H1 (cell line): ENCODE measurements at regions of chr4 and their contacts with region 1.

Region 1: GRCh38 chr4:96035727-96036126 is 195.8 kb downstream of the PDHA2 start:
- DNase-seq: no peak
- H3K4me3 ChIP-seq: no peak overlapping the region
- H3K27ac ChIP-seq: no peak overlapping the region
- H3K4me1 ChIP-seq: no peaks in the 10 kb centered on the region
- H3K27me3 ChIP-seq: no peaks in the 10 kb centered on the region
- CTCF ChIP-seq: peak in 1 of 3 experiments; percentile 57; a peak in 2 of 4 replicates
- EP300 ChIP-seq: no peak
- POLR2A ChIP-seq: no peak
- RAD21 ChIP-seq: peak; percentile 54 to 62

Region 2: DNA sequence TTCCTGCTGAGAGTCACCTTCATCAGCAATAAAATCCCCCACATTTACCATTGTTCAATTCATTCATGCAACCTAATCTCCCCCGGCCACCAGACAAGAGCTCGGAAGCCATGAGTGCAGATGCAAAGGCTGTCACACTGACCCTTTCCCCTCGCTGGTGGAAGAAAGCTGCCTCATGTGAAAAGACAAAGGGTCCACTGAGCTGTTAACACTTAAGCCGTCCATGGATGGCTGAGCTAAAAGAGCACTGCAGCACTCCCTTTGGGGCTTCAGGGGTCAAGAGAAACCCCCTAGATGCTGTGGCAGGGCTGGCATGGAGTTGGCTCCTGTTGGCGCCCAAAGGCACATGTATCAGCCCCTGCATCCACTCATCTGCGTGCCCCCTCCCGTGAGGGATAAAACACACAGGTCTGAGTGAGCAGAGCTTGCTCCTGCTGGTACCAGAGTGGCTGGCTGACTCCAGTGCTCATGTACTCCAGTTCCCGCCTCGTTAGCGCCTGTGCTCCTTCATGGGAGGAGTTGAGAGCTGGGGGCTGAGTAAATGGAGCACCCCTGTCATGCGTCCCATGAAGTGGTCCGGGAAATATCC is 20.7 kb after region 1 on chr4:
- CTCF ChIA-PET with region 1: interaction called, 14 read pairs
- POLR2A ChIA-PET with region 1: no interaction called
- DNase-seq: no peak
- H3K4me3 ChIP-seq: no peak overlapping the region
- H3K27ac ChIP-seq: no peak overlapping the region
- H3K4me1 ChIP-seq: no peaks in the 10 kb centered on the region
- H3K27me3 ChIP-seq: no peaks in the 10 kb centered on the region
- CTCF ChIP-seq: no peak
- EP300 ChIP-seq: no peak
- POLR2A ChIP-seq: no peak
- RAD21 ChIP-seq: no peak